ENCODE measurements at regions of chr19 and their contacts with region 1.

Region 1: DNA sequence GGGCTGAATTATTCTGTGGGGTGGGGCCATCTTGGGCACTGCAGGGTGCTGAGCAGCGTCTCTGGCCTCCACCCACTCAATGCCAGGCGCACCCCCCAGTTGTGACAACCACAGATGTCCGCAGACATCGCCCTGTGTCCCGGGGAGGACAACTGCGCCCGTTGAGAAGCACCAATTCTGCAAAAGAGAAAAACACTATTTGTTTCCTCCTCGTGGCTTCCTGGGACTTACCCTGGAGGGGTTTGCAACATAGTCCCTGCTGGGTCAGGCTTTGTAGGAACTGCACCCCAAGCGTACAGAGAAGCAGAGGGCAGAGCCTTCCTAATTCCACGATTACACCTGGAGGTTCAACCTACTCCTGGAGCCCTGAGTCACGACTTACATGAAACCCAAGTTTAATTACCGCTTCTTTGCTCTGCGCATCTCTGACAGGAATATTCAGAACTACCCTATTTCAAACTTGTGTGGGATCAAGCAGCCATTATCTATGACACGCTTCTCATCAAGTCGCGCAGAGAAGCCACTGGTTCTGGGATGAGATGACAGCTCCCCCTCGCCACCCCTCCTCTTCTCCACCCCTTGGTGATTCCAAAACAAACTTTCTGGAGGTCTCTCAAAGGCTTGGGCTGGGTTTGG is 11.1 kb upstream of the SLC39A3 start:
- DNase-seq: no peak
- ATAC-seq: no peak
- H3K4me3 ChIP-seq: no peak overlapping the region
- H3K27ac ChIP-seq: no peak overlapping the region
- H3K4me1 ChIP-seq: no peaks in the 10 kb centered on the region
- H3K27me3 ChIP-seq: peaks cover 1% of the 10 kb centered on the region; the same call in 1 of the 2 replicates
- CTCF ChIP-seq: no peak
- POLR2A ChIP-seq: no peak
- RAD21 ChIP-seq: no peak

Region 2: GRCh38 chr19:2648528-2648937 is 102.4 kb before region 1 on chr19:
- CTCF ChIA-PET with region 1: interaction called, 28 read pairs
- POLR2A ChIA-PET with region 1: no interaction called
- dilution Hi-C with region 1: no loop called
- in situ Hi-C with region 1: loop called (anchors 5 kb)
- intact Hi-C with region 1: loop called (anchors 1 kb)
- DNase-seq: peak; percentile 74
- ATAC-seq: peak; percentile 96
- H3K4me3 ChIP-seq: no peak overlapping the region
- H3K27ac ChIP-seq: no peak overlapping the region
- H3K4me1 ChIP-seq: no peaks in the 10 kb centered on the region
- H3K27me3 ChIP-seq: peaks cover 24% of the 10 kb centered on the region
- CTCF ChIP-seq: peak; percentile 97
- POLR2A ChIP-seq: no peak
- RAD21 ChIP-seq: peak; percentile 99

Measured in IMR-90 (cell line).